ENCODE measurements at regions of chr4 and their contacts with region 1.

Region 1: GRCh38 chr4:4941741-4942140 is 77.5 kb downstream of the CYTL1 start:
- DNase-seq: no peak
- ATAC-seq: no peak
- H3K4me3 Mint-ChIP-seq: no peak overlapping the region
- H3K27ac Mint-ChIP-seq: peak overlapping the region; percentile 31
- H3K4me1 Mint-ChIP-seq: peaks cover 57% of the 10 kb centered on the region
- H3K27me3 Mint-ChIP-seq: no peaks in the 10 kb centered on the region
- CTCF ChIP-seq: no peak

Region 2: GRCh38 chr4:4825431-4825830 is 116.3 kb before region 1 on chr4:
- CTCF ChIA-PET with region 1: no interaction called
- POLR2A ChIA-PET with region 1: no interaction called
- intact Hi-C with region 1: no loop called
- DNase-seq: no peak
- ATAC-seq: no peak
- H3K4me3 Mint-ChIP-seq: no peak overlapping the region
- H3K27ac Mint-ChIP-seq: no peak overlapping the region
- H3K4me1 Mint-ChIP-seq: no peaks in the 10 kb centered on the region
- H3K27me3 Mint-ChIP-seq: peaks cover 16% of the 10 kb centered on the region
- CTCF ChIP-seq: no peak

Region 3: DNA sequence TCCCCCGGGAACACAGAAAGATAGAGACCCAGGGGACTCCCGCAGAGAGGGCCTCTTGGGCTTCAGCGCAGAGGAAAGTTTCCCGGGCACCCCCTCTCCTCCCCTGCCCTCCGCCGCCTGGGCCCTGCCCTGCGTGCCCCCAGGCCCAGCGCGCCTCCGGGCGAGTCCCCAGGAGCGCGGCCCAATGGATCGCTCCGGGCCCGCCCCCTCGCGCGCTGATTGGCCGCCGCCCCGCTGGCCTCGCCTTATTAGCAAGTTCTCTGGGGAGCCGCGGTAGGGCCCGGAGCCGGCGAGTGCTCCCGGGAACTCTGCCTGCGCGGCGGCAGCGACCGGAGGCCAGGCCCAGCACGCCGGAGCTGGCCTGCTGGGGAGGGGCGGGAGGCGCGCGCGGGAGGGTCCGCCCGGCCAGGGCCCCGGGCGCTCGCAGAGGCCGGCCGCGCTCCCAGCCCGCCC is 82.3 kb before region 1 on chr4 and contains the start of gene MSX1:
- CTCF ChIA-PET with region 1: no interaction called
- POLR2A ChIA-PET with region 1: no interaction called
- intact Hi-C with region 1: loop called (anchors 2 kb)
- DNase-seq: peak; percentile 48
- ATAC-seq: peak; percentile 78
- H3K4me3 Mint-ChIP-seq: peak within 1 kb of the TSS; percentile 78
- H3K27ac Mint-ChIP-seq: no peak within 1 kb of the TSS
- H3K4me1 Mint-ChIP-seq: peaks cover 30% of the 10 kb centered on the region
- H3K27me3 Mint-ChIP-seq: peaks cover 59% of the 10 kb centered on the region
- CTCF ChIP-seq: no peak
- total RNA-seq, gene MSX1: not detected in 2 replicates

Region 4: DNA sequence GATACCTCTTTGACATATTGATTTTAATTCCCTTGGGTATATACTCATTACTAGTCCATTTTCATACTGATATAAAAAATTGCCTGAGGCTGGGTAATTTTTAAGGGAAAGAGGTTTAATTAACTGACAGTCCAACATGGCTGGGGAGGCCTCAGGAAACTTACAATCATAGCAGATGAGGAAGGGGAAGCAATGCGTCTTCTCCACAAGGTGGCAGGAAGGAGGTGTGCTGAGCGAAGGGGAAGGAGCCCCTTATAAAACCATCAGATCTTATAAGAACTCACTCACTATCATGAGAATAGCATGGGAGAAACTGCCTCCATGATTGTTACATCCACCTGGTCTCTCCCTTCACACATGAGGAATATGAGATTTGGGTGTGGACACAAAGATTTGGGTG is 39.9 kb before region 1 on chr4:
- CTCF ChIA-PET with region 1: no interaction called
- POLR2A ChIA-PET with region 1: no interaction called
- intact Hi-C with region 1: loop called (anchors 5 kb)
- DNase-seq: no peak
- ATAC-seq: no peak
- H3K4me3 Mint-ChIP-seq: no peak overlapping the region
- H3K27ac Mint-ChIP-seq: no peak overlapping the region
- H3K4me1 Mint-ChIP-seq: peaks cover 10% of the 10 kb centered on the region
- H3K27me3 Mint-ChIP-seq: peaks cover 7% of the 10 kb centered on the region
- CTCF ChIP-seq: no peak

Region 5: GRCh38 chr4:4930677-4931076 is 11.1 kb before region 1 on chr4:
- CTCF ChIA-PET with region 1: interaction called, 5 read pairs
- POLR2A ChIA-PET with region 1: interaction called, 8 read pairs
- intact Hi-C with region 1: loop called (anchors 1 kb)
- DNase-seq: no peak
- ATAC-seq: no peak
- H3K4me3 Mint-ChIP-seq: no peak overlapping the region
- H3K27ac Mint-ChIP-seq: no peak overlapping the region
- H3K4me1 Mint-ChIP-seq: peaks cover 20% of the 10 kb centered on the region
- H3K27me3 Mint-ChIP-seq: no peaks in the 10 kb centered on the region
- CTCF ChIP-seq: no peak

Region 6: DNA sequence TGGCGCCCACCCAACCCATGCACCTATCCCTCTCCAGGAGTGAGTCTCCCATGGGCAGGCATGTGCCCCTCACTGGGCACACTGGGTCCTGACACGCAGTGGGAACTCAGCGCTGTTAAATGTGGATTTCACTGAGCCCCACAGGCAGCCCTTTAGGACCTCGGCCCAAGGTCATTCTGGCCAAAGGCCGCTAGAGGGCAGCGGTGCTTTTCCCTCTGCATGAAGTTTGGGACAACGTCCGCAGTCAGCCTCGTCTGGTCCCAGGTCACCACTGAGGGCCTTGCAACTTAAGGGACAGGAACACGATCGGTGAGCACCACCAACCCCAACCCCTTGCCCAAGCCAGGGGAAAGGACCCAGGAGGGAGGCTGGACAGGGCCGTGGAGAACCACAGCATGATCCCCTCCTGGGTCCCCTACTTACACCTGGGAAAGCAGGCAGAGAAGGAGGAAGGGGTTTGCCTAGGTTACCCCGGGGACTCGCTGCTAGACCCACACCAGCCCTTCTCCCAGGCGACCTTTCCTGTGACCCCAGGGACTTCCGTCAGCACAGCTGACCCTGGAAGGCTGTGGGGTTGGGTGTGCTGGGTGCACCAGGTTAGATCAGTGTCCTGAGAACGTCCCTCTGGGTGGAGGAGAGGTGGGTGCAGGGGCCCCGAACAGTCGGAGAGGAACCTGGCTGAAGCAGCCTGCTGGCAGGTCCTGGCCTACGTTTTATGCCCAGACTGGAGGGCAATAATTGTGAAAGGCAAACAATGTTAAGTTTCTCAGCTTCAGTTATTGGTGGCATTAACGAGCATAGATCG is 53.6 kb after region 1 on chr4:
- CTCF ChIA-PET with region 1: interaction called, 13 read pairs
- POLR2A ChIA-PET with region 1: no interaction called
- intact Hi-C with region 1: loop called (anchors 1 kb)
- DNase-seq: peak; percentile 42
- ATAC-seq: peak; percentile 52
- H3K4me3 Mint-ChIP-seq: no peak overlapping the region
- H3K27ac Mint-ChIP-seq: no peak overlapping the region
- H3K4me1 Mint-ChIP-seq: peaks cover 7% of the 10 kb centered on the region
- H3K27me3 Mint-ChIP-seq: peaks cover 14% of the 10 kb centered on the region
- CTCF ChIP-seq: peak; percentile 78

Measured in activated B cell treated with CpG ODN at 0.5 μM for 24 hours (primary cell).